GM13977 (cell line): ENCODE measurements at regions of chr18 and their contacts with region 1.

Region 1: DNA sequence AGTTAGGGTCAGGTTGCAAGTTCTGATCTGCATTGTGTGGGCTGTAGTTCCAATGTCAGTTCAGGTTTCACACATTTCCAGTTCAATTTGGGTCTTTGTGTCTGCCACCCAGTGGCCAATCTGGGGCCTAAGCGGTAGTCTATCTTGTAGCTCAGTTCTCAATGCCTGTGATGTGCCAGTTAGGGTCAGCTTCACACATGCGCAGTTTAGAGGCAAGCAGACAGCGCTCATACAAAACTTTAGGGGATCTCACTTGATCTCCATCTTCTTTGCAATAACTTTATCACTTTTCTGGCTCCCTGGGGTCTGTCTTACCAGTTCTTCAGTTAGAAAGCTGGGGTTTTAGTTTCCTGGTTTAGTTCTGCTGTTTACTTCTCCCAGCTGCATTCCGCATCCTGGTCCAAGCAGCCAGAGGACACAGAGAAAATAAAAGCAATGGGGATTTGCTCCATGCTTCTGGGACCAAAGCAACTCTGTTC is 11.0 kb upstream of the ZNF24 start:
- DNase-seq: peak; percentile 67
- CTCF ChIP-seq: peak; percentile 74

Region 2: DNA sequence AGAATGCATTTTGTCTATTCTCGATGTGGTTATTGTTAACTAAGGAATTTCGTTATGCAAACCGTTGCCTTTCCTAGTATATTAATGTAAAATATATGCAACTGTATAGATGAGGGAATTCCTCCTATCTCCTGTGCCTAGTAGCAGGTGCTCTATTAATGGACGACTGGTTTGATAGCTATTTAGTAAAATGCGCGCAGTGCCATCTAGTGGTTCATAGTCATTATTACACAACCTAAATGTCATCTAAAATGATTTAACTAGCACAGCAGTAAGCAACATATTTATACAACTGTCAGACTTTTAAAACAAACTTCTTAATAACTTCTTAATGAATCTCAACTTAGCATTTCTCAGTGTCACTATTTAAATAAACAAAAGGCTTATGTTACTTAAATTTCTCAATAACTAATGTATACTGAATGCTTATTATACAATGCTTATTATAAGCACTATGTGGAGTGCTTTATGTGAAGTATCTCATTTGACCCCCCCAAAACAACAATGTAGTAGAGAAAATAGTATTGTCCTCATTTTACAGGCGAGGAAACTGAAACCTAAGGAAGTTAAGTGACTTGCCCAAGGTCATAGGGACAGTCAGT is 567.1 kb before region 1 on chr18:
- in situ Hi-C with region 1: no loop called
- DNase-seq: peak; percentile 54
- CTCF ChIP-seq: peak; percentile 71

Region 3: DNA sequence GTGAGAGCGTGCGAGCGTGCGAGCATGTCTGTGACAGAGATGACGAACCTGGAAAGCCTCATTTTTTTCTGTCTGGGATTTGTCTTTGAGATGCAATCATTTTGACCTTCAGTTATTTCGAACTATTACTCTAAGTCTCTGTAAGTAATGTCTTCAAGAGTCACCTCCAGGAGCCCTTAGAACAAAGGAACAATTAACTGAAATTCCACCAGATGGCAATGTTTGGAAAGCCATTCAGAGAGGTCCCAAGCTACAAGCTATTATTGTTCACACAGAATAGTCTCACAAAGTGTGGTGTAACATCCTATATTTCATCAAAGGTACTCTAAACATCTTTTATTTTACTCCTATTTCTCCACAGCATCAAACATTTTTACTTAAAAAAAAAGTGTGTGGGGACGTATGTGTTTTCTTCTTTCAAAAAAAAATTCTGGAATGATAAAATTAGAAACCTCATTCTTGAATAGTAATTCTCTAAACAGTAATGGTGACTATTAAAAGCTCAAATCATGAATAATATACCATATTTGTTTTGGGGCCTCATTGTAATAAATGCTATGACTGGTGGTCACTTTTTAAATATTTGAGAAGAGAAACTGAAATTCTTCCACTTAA is 349.1 kb before region 1 on chr18:
- in situ Hi-C with region 1: loop called (anchors 25 kb)
- DNase-seq: peak; percentile 57
- CTCF ChIP-seq: peak; percentile 42

Region 4: GRCh38 chr18:35231052-35231451 is 124.1 kb before region 1 on chr18:
- in situ Hi-C with region 1: loop called (anchors 10 kb)
- DNase-seq: peak; percentile 59
- CTCF ChIP-seq: peak; percentile 86